CD8-positive, alpha-beta memory T cell (primary cell): ENCODE measurements at regions of chr9 and their contacts with region 1.

Region 1: DNA sequence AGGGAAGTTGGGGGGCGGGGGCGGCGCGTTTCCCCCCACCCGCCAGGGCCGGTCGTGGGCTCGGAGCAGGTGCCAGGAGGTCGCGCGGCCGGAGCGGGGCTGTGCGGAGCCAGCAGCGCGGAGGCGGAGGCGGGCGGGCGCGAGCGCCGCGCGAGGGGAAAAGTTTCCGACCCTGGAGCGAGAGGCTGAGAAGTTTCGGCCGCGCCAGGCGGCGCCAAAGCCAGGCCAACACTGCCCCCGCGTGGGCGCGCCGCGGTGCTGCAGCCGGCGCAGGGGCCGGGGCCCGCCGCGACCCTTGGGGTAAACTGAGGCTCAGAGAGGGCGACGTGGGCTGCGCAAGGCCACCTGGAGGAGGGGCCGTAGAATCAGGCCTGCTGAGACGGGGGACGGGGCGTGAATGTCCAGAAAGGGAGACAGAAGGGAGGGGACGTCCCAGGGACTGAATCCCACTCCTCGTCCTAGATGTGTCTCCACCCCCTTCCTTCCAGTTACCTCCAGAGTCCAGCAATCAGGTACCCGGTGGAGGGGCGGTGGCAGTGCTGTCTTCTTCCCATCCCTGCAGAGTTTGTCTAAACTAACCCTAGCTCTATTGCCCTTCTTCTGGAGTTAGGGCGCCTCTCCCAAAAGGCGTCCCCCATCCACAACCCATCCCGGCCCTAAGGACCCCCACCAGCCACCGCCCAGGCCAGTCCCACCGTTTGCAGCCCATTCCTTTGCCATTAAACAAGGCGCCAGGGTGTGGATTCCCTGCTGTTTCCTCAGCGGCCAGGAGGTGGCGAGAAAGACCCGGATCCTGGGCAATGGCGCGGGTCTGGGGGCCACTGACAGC is 10.2 kb downstream of the C9orf50 start:
- DNase-seq: peak; percentile 67 to 82 (median 69)
- H3K4me3 ChIP-seq: peak overlapping the region; percentile 77
- H3K4me3 Mint-ChIP-seq: peak overlapping the region; percentile 73 to 90 (median 84)
- H3K27ac ChIP-seq: peak overlapping the region; percentile 61
- H3K27ac Mint-ChIP-seq: peak overlapping the region; percentile 36 to 99 (median 82)
- H3K4me1 ChIP-seq: peaks cover 29% of the 10 kb centered on the region
- H3K4me1 Mint-ChIP-seq: peaks cover 26 to 51% (median 28%) of the 10 kb centered on the region in 3 donors
- H3K27me3 ChIP-seq: no peaks in the 10 kb centered on the region
- H3K27me3 Mint-ChIP-seq: peaks cover 0 to 9% of the 10 kb centered on the region in 2 donors

Region 2: GRCh38 chr9:129320575-129321263 is 290.0 kb before region 1 on chr9:
- CTCF ChIA-PET with region 1: interaction called, 10 read pairs
- POLR2A ChIA-PET with region 1: no interaction called
- DNase-seq: peak; percentile 8 to 76 (median 57)
- H3K4me3 ChIP-seq: peak overlapping the region; percentile 53
- H3K4me3 Mint-ChIP-seq: peak overlapping the region; percentile 30 to 84 (median 82)
- H3K27ac ChIP-seq: peak overlapping the region; percentile 11
- H3K27ac Mint-ChIP-seq: peak overlapping the region in 6 of 8 donors; percentile 56 to 93 (median 90)
- H3K4me1 ChIP-seq: peaks cover 17% of the 10 kb centered on the region
- H3K4me1 Mint-ChIP-seq: peaks cover 9 to 16% (median 11%) of the 10 kb centered on the region in 3 donors
- H3K27me3 ChIP-seq: no peaks in the 10 kb centered on the region
- H3K27me3 Mint-ChIP-seq: peaks cover 0 to 3% of the 10 kb centered on the region in 2 donors

Region 3: DNA sequence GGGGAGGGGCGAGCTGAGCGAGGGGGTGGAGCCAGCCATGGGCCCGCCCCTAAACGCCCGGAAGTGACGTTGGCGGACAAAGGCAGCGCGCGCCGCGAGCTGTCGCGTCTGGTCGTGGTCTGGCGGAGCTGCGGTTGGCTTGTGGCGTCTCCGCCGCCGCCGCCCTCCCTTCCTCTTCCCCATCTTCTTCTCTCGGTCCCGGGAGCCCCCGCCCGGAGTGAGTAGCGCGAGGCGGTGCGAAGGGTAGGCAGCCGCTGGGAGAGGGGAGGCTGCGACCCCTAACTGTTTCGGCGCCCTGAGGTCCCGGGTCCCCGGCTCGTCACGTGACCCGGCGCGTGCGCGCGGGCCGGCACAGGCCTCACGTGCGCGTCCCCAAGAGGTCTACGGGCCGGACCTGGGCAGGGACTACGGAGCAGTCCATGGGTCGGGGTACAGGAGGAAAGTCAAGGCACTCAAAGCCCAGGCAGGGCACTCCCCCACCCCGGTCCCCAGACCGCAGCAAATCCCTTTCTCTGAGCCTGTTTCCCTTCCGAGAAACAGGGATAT is 15.5 kb after region 1 on chr9 and contains the start of gene NTMT1:
- CTCF ChIA-PET with region 1: interaction called, 17 read pairs
- POLR2A ChIA-PET with region 1: interaction called, 12 read pairs
- DNase-seq: peak; percentile 82 to 93 (median 89)
- H3K4me3 ChIP-seq: peak within 1 kb of the TSS; percentile 100
- H3K4me3 Mint-ChIP-seq: peak within 1 kb of the TSS; percentile 82 to 93 (median 89)
- H3K27ac ChIP-seq: peak within 1 kb of the TSS; percentile 97
- H3K27ac Mint-ChIP-seq: peak within 1 kb of the TSS; percentile 86 to 99 (median 97)
- H3K4me1 ChIP-seq: peaks cover 54% of the 10 kb centered on the region
- H3K4me1 Mint-ChIP-seq: peaks cover 48 to 63% (median 62%) of the 10 kb centered on the region in 3 donors
- H3K27me3 ChIP-seq: peaks cover 8% of the 10 kb centered on the region
- H3K27me3 Mint-ChIP-seq: peaks cover 6 to 11% of the 10 kb centered on the region in 2 donors
- total RNA-seq, gene NTMT1: 65.5 to 68.9 TPM